Activated CD4-positive, alpha-beta T cell treated with anti-CD3 and anti-CD28 coated beads for 36 hours (primary cell): ENCODE measurements at regions of chr6 and their contacts with region 1.

Region 1: GRCh38 chr6:4751823-4752467 is 24.3 kb upstream of the CDYL start:
- DNase-seq: no peak
- ATAC-seq: no peak
- H3K4me3 Mint-ChIP-seq: no peak overlapping the region
- H3K27ac Mint-ChIP-seq: no peak overlapping the region
- H3K4me1 Mint-ChIP-seq: no peaks in the 10 kb centered on the region
- H3K27me3 Mint-ChIP-seq: peaks cover 13% of the 10 kb centered on the region

Region 2: DNA sequence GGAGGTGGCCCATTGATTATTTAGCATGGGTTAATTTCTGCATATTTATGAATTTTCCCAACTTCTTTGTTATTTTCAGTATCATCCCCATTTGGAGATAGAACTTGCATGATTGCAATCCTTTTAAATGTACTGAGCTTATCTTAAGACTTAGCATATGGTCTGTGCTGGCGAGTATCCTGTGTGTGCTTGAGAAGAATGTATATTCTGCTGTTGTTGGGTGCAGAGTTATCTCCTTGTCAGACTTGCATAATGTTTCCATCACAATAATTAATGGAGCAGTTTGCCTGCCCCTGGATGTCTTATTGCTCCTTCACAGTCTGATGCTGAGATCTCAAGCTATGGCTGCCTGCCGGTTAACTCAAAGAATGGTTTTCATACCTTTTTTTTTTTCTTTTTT is 136.9 kb after region 1 on chr6:
- CTCF ChIA-PET with region 1: no interaction called
- POLR2A ChIA-PET with region 1: interaction called, 12 read pairs
- intact Hi-C with region 1: no loop called
- DNase-seq: no peak
- ATAC-seq: no peak
- H3K4me3 Mint-ChIP-seq: no peak overlapping the region
- H3K27ac Mint-ChIP-seq: no peak overlapping the region
- H3K4me1 Mint-ChIP-seq: peaks cover 17% of the 10 kb centered on the region
- H3K27me3 Mint-ChIP-seq: no peaks in the 10 kb centered on the region